Activated CD4-positive, alpha-beta T cell treated with anti-CD3 and anti-CD28 coated beads, Interleukin-2, amount 10 ng/mL, durations not matched to agents 24 days and 14 days (primary cell): ENCODE measurements at regions of chr14 and their contacts with region 1.

Region 1: DNA sequence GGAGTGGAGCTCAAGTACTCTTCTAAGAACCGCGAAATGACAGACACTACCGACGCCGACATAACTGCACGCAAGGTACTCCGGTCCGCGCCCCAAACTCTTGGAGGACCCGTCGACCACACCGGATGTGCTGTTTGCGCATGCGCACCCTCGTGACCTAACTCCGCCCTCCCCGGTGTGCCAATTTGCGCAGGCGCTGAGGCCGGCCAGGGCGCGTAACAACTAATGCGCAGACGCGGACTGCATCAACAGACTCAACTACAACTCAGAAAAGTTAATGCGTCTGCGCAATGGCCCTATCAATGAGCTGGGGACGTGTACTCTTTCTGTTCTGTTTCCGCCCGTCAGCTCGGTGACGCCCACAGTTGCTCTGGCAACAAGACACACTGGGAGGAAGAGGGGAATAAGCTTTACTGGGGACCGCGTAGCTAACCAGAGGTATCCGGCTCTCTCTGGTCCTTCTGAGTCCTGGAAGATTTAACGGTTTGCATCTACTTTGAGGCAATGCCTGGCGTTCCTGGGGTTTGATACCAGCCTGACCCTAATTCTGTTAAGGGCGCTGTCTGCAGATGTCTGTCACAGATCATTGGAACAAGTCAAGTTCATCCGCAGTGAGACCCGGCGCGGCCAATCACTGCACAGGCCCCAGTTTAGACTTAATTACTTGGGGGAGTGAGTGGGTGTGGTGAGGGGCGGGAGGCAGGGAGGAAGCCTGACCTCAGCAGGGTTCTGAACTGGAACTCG is at the start of gene DAD1:
- DNase-seq: peak; percentile 100
- H3K4me3 Mint-ChIP-seq: peak within 1 kb of the TSS; percentile 87
- H3K27ac Mint-ChIP-seq: peak within 1 kb of the TSS; percentile 99
- H3K4me1 Mint-ChIP-seq: peaks cover 49% of the 10 kb centered on the region
- H3K27me3 Mint-ChIP-seq: peaks cover 10% of the 10 kb centered on the region
- total RNA-seq, gene DAD1: 255 and 266 TPM in 2 replicates

Region 2: GRCh38 chr14:22737052-22737451 is 147.8 kb after region 1 on chr14:
- intact Hi-C with region 1: loop called (anchors 5 kb)
- DNase-seq: peak; percentile 83
- H3K4me3 Mint-ChIP-seq: no peak overlapping the region
- H3K27ac Mint-ChIP-seq: peak overlapping the region; percentile 82
- H3K4me1 Mint-ChIP-seq: peaks cover 24% of the 10 kb centered on the region
- H3K27me3 Mint-ChIP-seq: peaks cover 2% of the 10 kb centered on the region

Region 3: DNA sequence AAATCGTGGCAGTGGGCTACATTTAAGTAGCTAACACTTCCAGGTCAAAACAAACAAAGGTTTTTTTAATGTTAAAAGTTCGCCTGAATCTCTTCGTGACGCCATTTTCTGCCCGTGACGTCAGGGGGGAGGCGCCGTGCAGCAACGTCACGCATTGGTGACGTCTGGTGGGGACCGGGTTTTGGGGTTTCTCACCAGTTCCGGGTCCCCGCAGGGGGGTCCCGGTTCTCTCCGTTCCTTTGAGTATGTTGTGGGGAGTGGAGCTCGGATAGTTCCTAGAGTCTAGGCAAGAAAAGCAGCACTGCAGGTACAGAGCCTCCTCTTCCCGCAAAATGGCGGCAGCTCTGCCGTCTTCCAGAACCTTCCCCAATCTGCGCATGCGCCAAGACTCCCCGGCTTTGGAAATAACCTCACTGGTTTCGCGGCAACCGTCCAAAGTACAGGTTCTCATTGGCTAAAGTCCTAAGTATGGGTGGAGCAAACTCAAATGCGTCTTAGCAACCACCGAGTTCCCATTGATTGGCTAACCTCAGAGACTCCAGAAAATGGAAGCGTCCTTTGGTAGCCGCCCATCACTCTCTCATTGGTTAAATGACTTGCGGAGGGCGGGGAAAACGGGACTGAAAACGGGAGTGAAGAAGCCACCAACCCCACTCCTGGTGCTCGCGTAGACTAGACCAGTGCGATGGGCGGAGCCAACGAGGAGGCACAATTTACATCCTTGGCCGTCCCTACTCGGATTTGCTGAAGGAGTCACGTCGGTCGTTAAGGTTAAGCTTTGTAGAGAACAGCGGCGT is 329.7 kb after region 1 on chr14 and contains the start of gene RBM23:
- intact Hi-C with region 1: loop called (anchors 2 kb)
- DNase-seq: peak; percentile 100
- H3K4me3 Mint-ChIP-seq: peak within 1 kb of the TSS; percentile 95
- H3K27ac Mint-ChIP-seq: peak within 1 kb of the TSS; percentile 100
- H3K4me1 Mint-ChIP-seq: peaks cover 27% of the 10 kb centered on the region
- H3K27me3 Mint-ChIP-seq: peaks cover 2% of the 10 kb centered on the region
- total RNA-seq, gene RBM23: 82.7 and 90.2 TPM in 2 replicates

Region 4: GRCh38 chr14:23006544-23007419 is 417.5 kb after region 1 on chr14:
- intact Hi-C with region 1: loop called (anchors 2 kb)
- DNase-seq: peak; percentile 99
- H3K4me3 Mint-ChIP-seq: peak overlapping the region; percentile 92
- H3K27ac Mint-ChIP-seq: peak overlapping the region; percentile 95
- H3K4me1 Mint-ChIP-seq: peaks cover 36% of the 10 kb centered on the region
- H3K27me3 Mint-ChIP-seq: no peaks in the 10 kb centered on the region